Activated CD8-positive, alpha-beta T cell treated with anti-CD3 and anti-CD28 coated beads, Interleukin-2, amount 10 ng/mL, durations not matched to agents 7 days and 5 days (primary cell): ENCODE measurements at regions of chr1 and their contacts with region 1.

Region 1: GRCh38 chr1:225441314-225442122 is 13.7 kb upstream of the LBR start:
- DNase-seq: no peak
- ATAC-seq: no peak
- H3K4me3 Mint-ChIP-seq: peak overlapping the region; percentile 55
- H3K27ac Mint-ChIP-seq: peak overlapping the region; percentile 75
- H3K4me1 Mint-ChIP-seq: peaks cover 54% of the 10 kb centered on the region
- H3K27me3 Mint-ChIP-seq: no peaks in the 10 kb centered on the region

Region 2: GRCh38 chr1:225343624-225344023 is 97.9 kb before region 1 on chr1:
- CTCF ChIA-PET with region 1: no interaction called
- POLR2A ChIA-PET with region 1: no interaction called
- DNase-seq: no peak
- ATAC-seq: no peak
- H3K4me3 Mint-ChIP-seq: no peak overlapping the region
- H3K27ac Mint-ChIP-seq: no peak overlapping the region
- H3K4me1 Mint-ChIP-seq: no peaks in the 10 kb centered on the region
- H3K27me3 Mint-ChIP-seq: peaks cover 17% of the 10 kb centered on the region

Region 3: DNA sequence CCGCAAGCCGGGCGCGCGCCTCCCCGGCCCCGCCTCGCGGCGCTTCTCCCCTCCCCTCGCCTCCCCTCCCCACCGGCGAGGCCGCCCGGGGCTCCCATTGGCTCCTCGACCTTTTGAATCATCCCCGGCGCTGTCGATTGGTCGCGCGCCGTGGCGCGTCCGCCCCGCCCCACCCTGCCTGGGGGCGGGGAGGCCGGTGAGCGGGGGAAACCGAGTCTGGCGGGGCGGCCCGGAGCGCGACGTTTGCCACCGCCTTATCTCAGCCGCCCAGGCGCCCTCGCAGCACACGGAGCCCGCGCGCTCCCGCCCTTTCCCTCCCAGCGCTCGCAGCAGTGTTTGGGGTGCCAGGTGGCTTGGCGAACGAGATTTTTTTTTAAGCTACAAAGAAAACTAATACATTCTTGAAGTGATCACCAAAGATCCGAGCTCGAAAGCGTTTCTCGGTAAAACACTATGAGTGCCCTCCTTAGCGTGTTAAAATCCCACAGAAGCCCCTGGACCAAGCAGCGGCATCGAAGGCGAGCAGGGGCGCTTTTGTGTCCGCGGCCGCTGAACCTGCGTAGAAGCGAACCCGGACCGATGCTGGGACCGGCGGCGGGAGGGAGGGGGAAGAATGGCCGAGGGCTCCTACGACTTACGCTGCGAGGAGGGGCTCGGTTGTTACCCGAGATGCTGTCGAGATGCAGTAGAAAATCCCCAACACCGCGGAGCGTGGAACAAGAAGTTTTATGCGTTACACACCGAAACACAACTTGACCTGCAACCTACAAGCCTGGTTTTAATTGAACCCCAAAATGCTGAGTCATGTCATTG is 13.2 kb before region 1 on chr1:
- CTCF ChIA-PET with region 1: interaction called, 139 read pairs
- POLR2A ChIA-PET with region 1: interaction called, 104 read pairs
- DNase-seq: peak; percentile 94
- ATAC-seq: peak; percentile 92
- H3K4me3 Mint-ChIP-seq: peak overlapping the region; percentile 90
- H3K27ac Mint-ChIP-seq: peak overlapping the region; percentile 95
- H3K4me1 Mint-ChIP-seq: peaks cover 48% of the 10 kb centered on the region
- H3K27me3 Mint-ChIP-seq: no peaks in the 10 kb centered on the region

Region 4: GRCh38 chr1:225454733-225455132 is 13.2 kb after region 1 on chr1:
- CTCF ChIA-PET with region 1: interaction called, 12 read pairs
- POLR2A ChIA-PET with region 1: interaction called, 30 read pairs
- DNase-seq: no peak
- ATAC-seq: peak; percentile 81
- H3K4me3 Mint-ChIP-seq: no peak overlapping the region
- H3K27ac Mint-ChIP-seq: no peak overlapping the region
- H3K4me1 Mint-ChIP-seq: peaks cover 40% of the 10 kb centered on the region
- H3K27me3 Mint-ChIP-seq: no peaks in the 10 kb centered on the region

Region 5: DNA sequence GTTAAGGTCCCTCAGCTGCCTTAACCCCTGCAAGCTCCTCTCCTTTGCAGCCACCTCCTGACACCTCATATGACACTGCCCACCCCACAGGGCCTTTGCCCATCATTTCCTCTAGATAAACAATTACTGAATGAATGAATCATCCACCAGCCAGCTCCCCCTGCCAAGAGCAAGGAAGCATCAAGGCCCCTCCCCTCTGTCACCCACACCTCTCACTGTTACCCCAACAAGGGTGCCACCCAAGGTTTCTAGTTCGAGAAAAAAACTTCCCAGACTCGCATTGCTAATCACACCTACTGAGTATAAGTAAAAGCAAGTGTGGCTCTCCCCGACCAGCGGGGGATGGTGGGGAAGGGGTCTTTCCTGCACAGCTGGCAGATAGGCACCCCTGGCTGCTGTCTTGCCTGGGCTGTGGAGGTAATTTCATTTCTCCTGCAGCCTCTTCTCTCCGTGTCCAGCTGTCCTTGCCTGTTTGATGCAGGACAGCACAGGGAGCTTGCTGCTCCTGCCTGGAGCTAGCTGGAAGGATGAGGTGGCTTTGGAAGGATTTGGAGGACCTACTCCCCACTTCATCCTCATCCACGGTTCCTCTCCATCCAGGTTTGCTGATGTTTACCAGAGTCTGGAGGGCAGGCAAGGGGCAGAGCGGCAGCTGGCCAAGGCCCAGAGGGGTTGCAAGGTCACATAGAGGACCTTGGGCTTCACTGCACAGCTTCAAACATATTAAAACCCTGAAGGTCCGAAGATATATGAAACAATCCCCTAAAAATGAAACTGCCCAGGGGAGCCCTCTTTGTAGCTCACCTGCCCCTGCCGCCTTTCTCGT is 19.4 kb after region 1 on chr1:
- CTCF ChIA-PET with region 1: interaction called, 12 read pairs
- POLR2A ChIA-PET with region 1: interaction called, 30 read pairs
- DNase-seq: peak; percentile 53
- ATAC-seq: peak; percentile 57
- H3K4me3 Mint-ChIP-seq: no peak overlapping the region
- H3K27ac Mint-ChIP-seq: peak overlapping the region; percentile 75
- H3K4me1 Mint-ChIP-seq: peaks cover 60% of the 10 kb centered on the region
- H3K27me3 Mint-ChIP-seq: no peaks in the 10 kb centered on the region